AG04449 (cell line): ENCODE measurements at regions of chr12 and their contacts with region 1.

Region 1: GRCh38 chr12:53352331-53353256 is 16.4 kb upstream of the SP7 start:
- DNase-seq: peak; percentile 29
- H3K4me3 ChIP-seq: no peak overlapping the region
- CTCF ChIP-seq: peak; percentile 84

Region 2: DNA sequence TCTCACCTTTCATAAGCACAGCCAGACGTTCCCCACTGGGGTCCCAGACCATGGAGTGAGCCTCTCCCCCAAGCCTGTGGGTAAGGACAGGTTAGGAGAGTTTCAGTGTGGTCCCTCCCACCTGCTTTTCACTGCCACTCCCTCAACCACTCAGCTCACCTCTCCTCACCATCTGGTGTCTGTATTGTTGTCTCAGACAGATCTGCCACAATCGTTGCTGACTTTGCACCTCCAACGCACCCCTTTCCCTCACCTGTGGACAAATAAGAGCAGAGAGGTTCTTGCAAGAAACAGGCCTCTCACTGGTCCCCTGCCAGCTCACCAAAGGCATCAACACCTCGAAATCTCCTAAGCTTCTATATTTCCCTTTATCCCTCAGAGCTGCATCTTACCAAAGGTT is 44.3 kb before region 1 on chr12:
- CTCF ChIA-PET with region 1: no interaction called
- POLR2A ChIA-PET with region 1: no interaction called
- DNase-seq: no peak
- H3K4me3 ChIP-seq: no peak overlapping the region
- CTCF ChIP-seq: no peak

Region 3: GRCh38 chr12:53365245-53365904 is 12.8 kb after region 1 on chr12:
- CTCF ChIA-PET with region 1: interaction called, 53 read pairs
- POLR2A ChIA-PET with region 1: interaction called, 3 read pairs
- DNase-seq: no peak
- H3K4me3 ChIP-seq: no peak overlapping the region
- CTCF ChIP-seq: no peak

Region 4: DNA sequence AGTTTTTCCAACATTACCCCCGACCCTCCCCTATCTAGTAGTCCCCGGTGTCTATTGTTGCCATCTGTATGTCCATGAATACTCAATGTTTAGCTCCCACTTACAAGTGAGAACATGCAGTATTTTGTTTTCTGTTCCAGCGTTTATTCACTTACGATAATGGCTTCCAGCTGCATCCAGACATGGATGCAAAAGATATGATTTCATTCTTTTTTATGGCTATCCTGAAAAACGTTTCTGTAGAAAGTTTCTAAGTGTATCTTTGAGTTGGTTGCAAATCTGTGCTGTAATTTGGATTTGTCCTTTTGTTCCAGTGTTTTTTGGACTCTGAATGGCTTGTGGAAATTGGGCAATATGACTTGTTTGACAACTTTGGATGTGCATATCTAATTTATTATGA is 39.1 kb after region 1 on chr12:
- CTCF ChIA-PET with region 1: interaction called, 16 read pairs
- POLR2A ChIA-PET with region 1: no interaction called
- DNase-seq: no peak
- H3K4me3 ChIP-seq: no peak overlapping the region
- CTCF ChIP-seq: no peak

Region 5: GRCh38 chr12:53427905-53428594 is 75.5 kb after region 1 on chr12:
- CTCF ChIA-PET with region 1: interaction called, 593 read pairs
- POLR2A ChIA-PET with region 1: interaction called, 4 read pairs
- DNase-seq: peak; percentile 71
- H3K4me3 ChIP-seq: no peak overlapping the region
- CTCF ChIP-seq: no peak

Region 6: DNA sequence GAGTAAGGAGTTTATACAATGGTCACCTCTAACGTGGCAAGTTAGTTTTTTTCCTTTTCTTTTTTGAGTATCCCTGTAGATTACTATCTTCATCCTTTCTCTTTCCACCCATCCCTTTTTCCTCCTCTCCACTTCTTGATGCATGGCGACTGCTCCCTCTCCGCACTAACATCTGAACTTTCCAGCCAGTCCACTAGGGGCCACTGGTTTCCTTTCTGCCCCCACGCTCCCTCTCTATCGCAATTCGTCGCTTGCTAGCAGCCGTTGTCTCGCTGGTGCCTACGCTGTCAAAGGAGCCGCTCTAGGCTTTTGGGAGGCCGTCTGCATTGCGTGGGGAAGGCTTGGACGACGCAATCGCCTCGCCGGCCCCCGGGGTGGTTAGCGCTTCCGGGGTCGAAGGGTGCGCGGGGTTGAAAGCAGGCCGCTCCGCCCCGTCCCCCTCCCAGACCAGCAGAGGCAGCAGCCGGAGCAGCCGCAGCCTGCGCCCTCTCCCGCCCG is 99.1 kb after region 1 on chr12 and contains the start of gene PCBP2:
- CTCF ChIA-PET with region 1: interaction called, 16 read pairs
- POLR2A ChIA-PET with region 1: no interaction called
- DNase-seq: peak; percentile 97
- H3K4me3 ChIP-seq: peak within 1 kb of the TSS; percentile 88
- CTCF ChIP-seq: peak; percentile 93

Region 7: DNA sequence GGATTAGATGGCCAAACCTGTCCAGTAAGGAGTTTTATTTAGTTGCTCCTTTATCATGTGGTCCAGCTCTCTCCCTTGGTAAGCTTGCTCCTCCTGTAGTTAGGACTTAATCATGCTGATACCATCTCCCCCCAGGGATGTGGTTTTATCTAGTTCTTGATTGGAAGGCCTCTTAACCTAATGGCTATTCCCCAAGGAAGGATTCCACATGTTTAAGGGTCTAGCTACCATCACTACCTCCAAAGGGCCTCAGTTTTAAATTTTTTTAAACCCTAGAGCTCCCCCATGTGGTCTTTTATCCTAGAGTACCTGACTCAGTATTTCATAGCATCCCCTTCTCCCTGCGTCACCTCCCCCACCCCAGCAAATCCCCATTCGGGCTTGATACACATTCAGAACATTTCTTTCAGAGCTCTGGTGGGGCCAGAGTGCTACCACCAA is 124.2 kb after region 1 on chr12:
- CTCF ChIA-PET with region 1: interaction called, 24 read pairs
- POLR2A ChIA-PET with region 1: no interaction called
- DNase-seq: no peak
- H3K4me3 ChIP-seq: no peak overlapping the region
- CTCF ChIP-seq: no peak

Region 8: DNA sequence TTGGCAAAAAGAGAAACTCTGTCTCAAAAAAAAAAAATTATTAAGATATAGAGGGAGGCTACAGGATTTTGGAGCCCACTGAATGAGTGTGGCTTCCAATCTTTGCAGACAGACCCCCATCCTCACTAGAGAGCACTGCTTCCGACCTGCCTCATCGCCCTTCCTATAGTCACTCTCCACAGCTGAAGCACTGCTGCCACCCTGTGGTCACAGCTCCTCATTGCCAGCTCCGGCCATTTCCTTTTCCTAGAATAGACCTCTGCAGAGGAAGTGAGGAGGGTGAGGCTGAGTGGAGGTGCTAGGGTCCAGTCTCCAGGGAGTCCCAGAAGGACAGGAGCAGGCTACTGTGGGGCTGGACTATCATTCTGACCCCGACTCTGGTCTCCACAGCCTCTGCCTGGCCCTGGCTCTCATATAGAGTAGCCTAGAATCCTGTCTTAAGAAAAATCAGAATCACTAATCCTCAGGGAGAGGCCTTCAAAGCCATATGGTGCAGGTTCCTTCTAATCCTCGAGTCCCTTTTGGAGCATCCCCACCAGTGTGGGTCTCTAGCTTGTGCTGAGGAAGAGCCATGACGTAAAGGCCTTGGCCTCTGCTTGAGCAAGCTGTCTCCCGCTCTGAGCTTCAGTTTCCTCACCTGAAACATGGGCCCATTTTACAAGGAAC is 156.1 kb after region 1 on chr12:
- CTCF ChIA-PET with region 1: interaction called, 113 read pairs
- POLR2A ChIA-PET with region 1: no interaction called
- DNase-seq: no peak
- H3K4me3 ChIP-seq: no peak overlapping the region
- CTCF ChIP-seq: peak; percentile 95